ENCODE measurements at regions of chr11 and their contacts with region 1.

Region 1: DNA sequence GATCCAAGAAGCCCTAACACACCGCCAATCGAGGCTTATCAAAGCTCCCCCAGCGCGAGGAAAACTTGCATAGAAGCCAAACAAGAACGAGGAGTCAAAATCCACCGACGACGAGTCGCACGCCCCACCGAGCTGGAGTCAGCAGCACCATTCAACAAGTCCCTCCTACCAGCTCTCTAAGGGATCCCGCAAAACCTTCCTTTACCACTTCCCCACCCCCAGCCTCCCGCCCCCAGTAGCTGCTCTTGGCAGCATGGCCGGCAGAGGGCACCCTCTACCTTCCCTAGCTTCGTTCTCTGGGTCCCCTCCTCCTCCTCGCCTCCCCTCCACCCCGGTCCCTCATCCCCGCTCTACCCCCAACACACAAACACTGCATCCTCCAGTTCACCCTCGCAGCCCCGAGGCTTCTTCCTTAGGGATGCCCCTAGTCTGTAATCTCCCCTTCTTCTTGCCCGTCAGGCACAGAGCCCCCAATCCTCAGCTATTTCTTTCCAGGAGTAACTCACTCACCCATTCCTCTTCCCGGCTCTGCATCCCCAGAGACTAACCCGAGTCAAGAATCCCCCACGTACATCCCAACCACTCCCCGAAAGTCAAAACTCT is 1.3 kb downstream of the BDNF start:
- DNase-seq: peak; percentile 70 to 88 (median 86)
- ATAC-seq: peak; percentile 91 to 92
- H3K4me3 ChIP-seq: peak overlapping the region; percentile 81
- H3K27ac ChIP-seq: no peak overlapping the region
- H3K4me1 ChIP-seq: peaks cover 7% of the 10 kb centered on the region
- H3K27me3 ChIP-seq: no peaks in the 10 kb centered on the region

Region 2: DNA sequence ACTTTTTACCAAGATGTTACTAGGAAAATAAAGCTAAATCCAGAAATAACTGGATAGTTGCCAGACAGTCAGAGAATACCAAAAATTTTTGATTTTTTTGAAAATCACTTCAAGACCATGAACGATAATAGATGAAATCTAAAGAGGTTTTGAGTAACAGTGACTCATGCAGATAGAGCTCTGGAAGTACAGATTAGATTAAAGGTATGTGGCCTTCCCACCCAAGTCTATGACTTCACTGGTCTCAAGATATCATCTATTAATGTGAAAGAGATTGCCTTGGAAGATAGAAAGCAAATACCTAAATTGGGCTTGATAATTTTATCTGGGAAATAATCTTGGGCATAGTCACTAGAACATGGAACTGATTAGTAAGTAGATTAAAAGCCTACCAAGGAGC is 825.1 kb after region 1 on chr11:
- intact Hi-C with region 1: loop called in 1 of 4 experiments (anchors 5 kb)
- DNase-seq: no peak
- ATAC-seq: no peak
- H3K4me3 ChIP-seq: no peak overlapping the region
- H3K27ac ChIP-seq: no peak overlapping the region
- H3K4me1 ChIP-seq: no peaks in the 10 kb centered on the region
- H3K27me3 ChIP-seq: no peaks in the 10 kb centered on the region

Region 3: DNA sequence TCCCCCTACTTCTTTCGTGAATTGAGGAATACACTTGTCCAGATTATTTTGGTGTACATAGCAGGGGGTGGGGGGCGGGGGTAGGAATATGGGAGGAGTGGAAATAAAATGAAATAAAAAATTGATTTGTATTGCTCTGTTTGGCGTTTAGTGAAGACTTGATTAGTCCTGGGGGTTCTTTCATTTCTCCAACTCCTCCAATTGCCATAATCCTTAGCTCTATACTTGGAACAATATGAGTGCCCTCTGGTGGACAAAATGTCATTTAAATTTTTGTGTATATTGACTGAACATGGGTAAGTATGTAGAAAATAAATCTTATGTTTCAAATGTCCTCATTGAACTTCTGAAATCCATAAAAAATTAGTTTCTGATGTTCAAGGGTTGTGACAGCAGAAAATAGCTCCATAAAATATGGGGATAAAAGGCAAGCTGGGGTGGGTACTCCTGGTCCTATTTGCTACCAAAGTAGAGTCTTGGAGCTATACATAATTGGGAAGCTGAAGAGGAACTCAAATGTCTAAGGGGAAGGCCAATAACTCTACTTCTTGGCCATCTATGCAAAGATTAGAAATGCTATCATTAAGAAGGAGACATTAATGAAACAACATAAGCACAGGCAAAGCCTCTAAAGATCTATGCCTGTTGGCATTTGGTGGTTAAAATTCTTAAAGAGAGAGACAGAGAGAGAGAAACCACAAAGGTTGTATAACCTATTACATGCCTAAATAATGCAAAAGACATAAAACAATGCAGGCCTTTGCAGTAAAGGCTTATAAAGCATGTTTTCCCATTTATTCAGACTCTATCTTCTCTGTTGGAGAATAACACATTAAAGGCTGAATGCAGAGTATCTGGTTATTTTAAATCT is 830.8 kb after region 1 on chr11:
- intact Hi-C with region 1: loop called in 3 of 4 experiments (anchors 5 kb)
- DNase-seq: no peak
- ATAC-seq: no peak
- H3K4me3 ChIP-seq: no peak overlapping the region
- H3K27ac ChIP-seq: no peak overlapping the region
- H3K4me1 ChIP-seq: no peaks in the 10 kb centered on the region
- H3K27me3 ChIP-seq: no peaks in the 10 kb centered on the region

Region 4: GRCh38 chr11:29333993-29334775 is 1635.2 kb after region 1 on chr11:
- intact Hi-C with region 1: loop called in 3 of 4 experiments (anchors 10 kb)
- DNase-seq: no peak
- ATAC-seq: no peak
- H3K4me3 ChIP-seq: no peak overlapping the region
- H3K27ac ChIP-seq: no peak overlapping the region
- H3K4me1 ChIP-seq: no peaks in the 10 kb centered on the region
- H3K27me3 ChIP-seq: no peaks in the 10 kb centered on the region